ENCODE measurements at regions of chr10 and their contacts with region 1.

Region 1: DNA sequence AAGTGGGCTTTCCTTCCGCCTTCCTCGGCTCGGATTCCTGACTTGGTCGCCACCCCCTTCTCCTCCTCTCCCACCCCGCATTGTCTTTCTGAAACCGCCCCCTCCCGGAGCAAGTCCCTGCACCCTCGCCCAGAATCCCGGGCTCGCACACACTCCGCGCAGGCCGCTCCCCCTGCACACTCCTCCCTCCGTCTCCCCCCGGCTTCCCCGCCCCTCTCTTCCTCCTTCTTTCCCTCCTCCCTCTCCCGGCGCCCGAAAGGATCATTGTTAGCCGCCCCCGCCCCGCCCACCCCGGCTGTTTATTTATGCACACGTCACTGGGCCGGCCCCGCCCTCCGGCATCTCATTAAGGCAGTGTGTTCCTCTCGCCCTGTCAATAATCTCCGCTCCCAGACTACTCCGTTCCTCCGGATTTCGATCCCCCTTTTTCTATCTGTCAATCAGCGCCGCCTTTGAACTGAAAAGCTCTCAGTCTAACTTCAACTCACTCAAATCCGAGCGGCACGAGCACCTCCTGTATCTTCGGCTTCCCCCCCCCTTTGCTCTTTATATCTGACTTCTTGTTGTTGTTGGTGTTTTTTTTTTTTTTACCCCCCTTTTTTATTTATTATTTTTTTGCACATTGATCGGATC is at the start of gene TCF7L2:
- DNase-seq: peak; percentile 51
- H3K4me3 Mint-ChIP-seq: peak within 1 kb of the TSS; percentile 91
- H3K27ac Mint-ChIP-seq: peak within 1 kb of the TSS; percentile 74
- H3K4me1 Mint-ChIP-seq: peaks cover 21% of the 10 kb centered on the region
- H3K27me3 Mint-ChIP-seq: peaks cover 44% of the 10 kb centered on the region
- total RNA-seq, gene TCF7L2: 2.0 to 2.1 TPM

Region 2: GRCh38 chr10:112183329-112184051 is 766.5 kb before region 1 on chr10 and contains the start of gene GPAM:
- CTCF ChIA-PET with region 1: no interaction called
- intact Hi-C with region 1: loop called (anchors 1 kb)
- DNase-seq: peak; percentile 97
- H3K4me3 Mint-ChIP-seq: peak within 1 kb of the TSS; percentile 85
- H3K27ac Mint-ChIP-seq: peak within 1 kb of the TSS; percentile 74
- H3K4me1 Mint-ChIP-seq: peaks cover 20% of the 10 kb centered on the region
- H3K27me3 Mint-ChIP-seq: no peaks in the 10 kb centered on the region
- total RNA-seq, gene GPAM: 7.3 to 8.1 TPM

Region 3: GRCh38 chr10:112375721-112376395 is 574.1 kb before region 1 on chr10:
- CTCF ChIA-PET with region 1: no interaction called
- intact Hi-C with region 1: loop called (anchors 5 kb)
- DNase-seq: peak; percentile 49
- H3K4me3 Mint-ChIP-seq: peak overlapping the region; percentile 97
- H3K27ac Mint-ChIP-seq: peak overlapping the region; percentile 99
- H3K4me1 Mint-ChIP-seq: peaks cover 55% of the 10 kb centered on the region
- H3K27me3 Mint-ChIP-seq: no peaks in the 10 kb centered on the region

Region 4: GRCh38 chr10:112461029-112461887 is 488.7 kb before region 1 on chr10:
- CTCF ChIA-PET with region 1: no interaction called
- intact Hi-C with region 1: loop called (anchors 5 kb)
- DNase-seq: peak; percentile 90
- H3K4me3 Mint-ChIP-seq: no peak overlapping the region
- H3K27ac Mint-ChIP-seq: peak overlapping the region; percentile 95
- H3K4me1 Mint-ChIP-seq: peaks cover 23% of the 10 kb centered on the region
- H3K27me3 Mint-ChIP-seq: no peaks in the 10 kb centered on the region

Region 5: GRCh38 chr10:112981553-112981952 is 31.6 kb after region 1 on chr10:
- CTCF ChIA-PET with region 1: no interaction called
- intact Hi-C with region 1: loop called (anchors 1 kb)
- DNase-seq: peak; percentile 73
- H3K4me3 Mint-ChIP-seq: no peak overlapping the region
- H3K27ac Mint-ChIP-seq: no peak overlapping the region
- H3K4me1 Mint-ChIP-seq: peaks cover 24% of the 10 kb centered on the region
- H3K27me3 Mint-ChIP-seq: peaks cover 61% of the 10 kb centered on the region

Region 6: GRCh38 chr10:113007032-113007771 is 57.2 kb after region 1 on chr10:
- CTCF ChIA-PET with region 1: no interaction called
- intact Hi-C with region 1: loop called (anchors 1 kb)
- DNase-seq: peak; percentile 68
- H3K4me3 Mint-ChIP-seq: peak overlapping the region; percentile 64
- H3K27ac Mint-ChIP-seq: peak overlapping the region; percentile 48
- H3K4me1 Mint-ChIP-seq: peaks cover 25% of the 10 kb centered on the region
- H3K27me3 Mint-ChIP-seq: peaks cover 78% of the 10 kb centered on the region

Region 7: GRCh38 chr10:113093188-113094113 is 143.5 kb after region 1 on chr10:
- CTCF ChIA-PET with region 1: no interaction called
- intact Hi-C with region 1: loop called (anchors 2 kb)
- DNase-seq: no peak
- H3K4me3 Mint-ChIP-seq: no peak overlapping the region
- H3K27ac Mint-ChIP-seq: peak overlapping the region; percentile 4
- H3K4me1 Mint-ChIP-seq: peaks cover 23% of the 10 kb centered on the region
- H3K27me3 Mint-ChIP-seq: no peaks in the 10 kb centered on the region